ENCODE measurements at regions of chr13 and their contacts with region 1.

Region 1: GRCh38 chr13:91722267-91722884 is 324.0 kb downstream of the GPC5 start:
- ATAC-seq: no peak
- H3K4me3 ChIP-seq: no peak overlapping the region
- H3K27ac ChIP-seq: no peak overlapping the region
- H3K4me1 ChIP-seq: no peaks in the 10 kb centered on the region

Region 2: GRCh38 chr13:91398413-91399272 is 323.7 kb before region 1 on chr13 and contains the start of gene GPC5:
- in situ Hi-C with region 1: loop called in 1 of 9 experiments (anchors 25 kb)
- ATAC-seq: peak; percentile 94 to 98 (median 97)
- H3K4me3 ChIP-seq: peak within 1 kb of the TSS; percentile 41 to 53 (median 47)
- H3K27ac ChIP-seq: peak within 1 kb of the TSS in 1 of 2 donors; percentile 31
- H3K4me1 ChIP-seq: peaks cover 0 to 3% of the 10 kb centered on the region in 2 donors
- total RNA-seq, gene GPC5: 0.10 to 4.1 (median 2.3) TPM in 6 of 8 experiments, not detected in the others

Region 3: GRCh38 chr13:91894316-91894715 is 171.9 kb after region 1 on chr13:
- in situ Hi-C with region 1: no loop called
- ATAC-seq: no peak
- H3K4me3 ChIP-seq: no peak overlapping the region
- H3K27ac ChIP-seq: no peak overlapping the region
- H3K4me1 ChIP-seq: no peaks in the 10 kb centered on the region

Measured in motor neuron (in vitro differentiated cells).